GM13976 (cell line): ENCODE measurements at regions of chr2 and their contacts with region 1.

Region 1: DNA sequence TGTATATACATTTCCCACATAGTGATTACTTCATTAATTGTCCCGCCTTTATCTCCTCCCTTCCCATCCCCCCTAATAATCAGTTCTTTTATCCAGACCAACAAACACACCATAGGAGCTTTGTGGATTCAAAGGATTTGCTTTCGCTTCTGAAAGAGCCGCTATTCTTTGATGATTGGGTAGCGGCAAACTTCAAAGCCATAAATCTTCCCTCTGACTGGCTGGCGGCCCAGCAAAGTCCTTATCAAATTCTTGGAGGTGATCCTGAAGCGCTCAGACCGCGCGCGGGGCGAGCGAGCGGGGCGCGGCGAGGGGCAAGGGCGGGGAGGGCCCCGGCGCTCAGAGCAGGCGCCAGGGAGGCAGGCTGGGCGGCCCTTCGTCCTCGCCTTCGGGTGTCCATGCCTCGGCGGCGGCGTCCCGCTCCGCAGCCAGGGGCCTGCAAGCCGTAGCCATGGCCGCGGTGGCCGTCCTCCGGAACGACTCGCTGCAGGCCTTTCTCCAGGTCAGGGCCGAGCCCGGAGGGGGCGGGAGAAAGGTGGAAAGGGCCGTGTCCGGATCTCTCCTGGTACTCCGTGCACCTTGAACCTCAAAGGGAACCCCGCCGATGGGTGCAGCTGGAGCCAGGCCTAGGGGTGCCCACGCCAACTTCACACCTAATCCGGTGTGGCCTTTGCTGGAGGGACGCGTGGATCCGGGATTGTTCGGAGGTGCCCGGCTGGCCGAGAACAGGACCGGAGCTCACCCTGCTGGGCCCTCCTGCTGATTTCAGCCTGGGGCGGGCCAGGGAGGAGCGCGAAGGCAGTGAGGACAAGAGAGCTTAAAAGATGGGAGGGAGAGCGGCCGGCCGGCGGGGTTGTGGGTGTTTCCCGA is at the start of gene SP5:
- DNase-seq: peak; percentile 56
- CTCF ChIP-seq: no peak

Region 2: GRCh38 chr2:171141320-171141719 is 426.0 kb after region 1 on chr2:
- in situ Hi-C with region 1: no loop called
- DNase-seq: no peak
- CTCF ChIP-seq: no peak

Region 3: DNA sequence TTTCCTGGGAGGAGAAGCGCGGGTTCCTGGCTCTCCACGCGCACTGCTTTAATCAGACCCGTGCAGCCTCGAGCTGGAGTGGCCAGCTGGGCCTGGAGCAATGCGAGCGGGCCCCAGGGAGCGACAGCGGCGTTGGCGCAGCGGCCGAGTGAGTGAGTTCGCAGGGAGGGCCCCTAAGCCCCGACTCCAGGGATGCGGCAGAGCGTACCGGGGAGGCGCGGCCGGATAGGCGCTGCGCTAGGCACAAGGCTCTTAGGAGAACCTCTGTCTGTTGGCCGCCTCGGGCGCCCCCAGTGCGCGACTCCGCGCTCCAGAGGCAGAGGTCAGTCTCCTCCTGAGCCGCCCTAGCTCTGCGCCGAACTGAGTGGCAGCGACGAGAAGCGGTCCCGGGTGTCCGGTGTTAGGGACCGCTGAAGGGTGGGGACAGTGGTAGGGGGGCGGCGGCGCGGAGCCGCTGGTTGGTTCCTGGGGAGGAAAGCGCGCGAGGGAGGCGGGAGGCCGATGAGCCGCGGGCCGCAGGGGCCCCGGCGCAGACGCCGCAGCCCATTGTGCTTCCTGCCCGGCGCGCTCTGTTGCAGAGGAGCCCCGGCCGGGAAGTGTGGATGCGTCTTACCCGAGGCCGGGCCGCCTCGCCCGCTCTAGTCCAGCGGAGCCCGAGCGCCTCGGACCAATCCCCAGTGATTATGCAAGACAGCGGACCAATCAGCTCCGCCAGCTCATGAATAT is 1369.6 kb after region 1 on chr2:
- in situ Hi-C with region 1: loop called (anchors 25 kb)
- DNase-seq: peak; percentile 88
- CTCF ChIP-seq: no peak